Activated naive CD8-positive, alpha-beta T cell treated with anti-CD3 and anti-CD28 coated beads, Interleukin-2, amount 10 ng/mL, durations not matched to agents 7 days and 5 days (primary cell): ENCODE measurements at regions of chr3 and their contacts with region 1.

Region 1: DNA sequence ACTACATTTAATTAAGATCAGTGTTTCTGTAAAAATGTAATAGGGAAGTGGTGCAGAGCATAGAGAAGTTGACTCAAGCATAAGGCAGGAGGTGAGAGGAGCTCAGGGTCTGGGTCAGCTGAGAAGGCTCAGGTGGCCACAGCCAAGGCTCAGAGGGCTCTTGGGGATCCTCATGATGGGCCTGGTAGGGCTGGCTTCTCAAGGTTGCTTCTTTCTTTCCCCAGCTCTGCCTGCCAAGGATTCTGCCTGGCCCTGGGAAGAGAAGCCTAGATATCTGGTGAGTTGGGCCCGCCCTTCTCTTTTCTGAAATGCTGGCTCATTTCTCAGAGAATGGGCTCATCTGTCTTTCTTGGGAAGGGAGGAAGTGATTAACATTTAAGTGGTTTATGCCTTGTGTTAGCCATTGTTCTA is 6.5 kb downstream of the ZNF589 start:
- DNase-seq: peak; percentile 37
- ATAC-seq: peak; percentile 83
- H3K4me3 Mint-ChIP-seq: peak overlapping the region; percentile 56
- H3K27ac Mint-ChIP-seq: peak overlapping the region; percentile 80
- H3K4me1 Mint-ChIP-seq: peaks cover 29% of the 10 kb centered on the region
- H3K27me3 Mint-ChIP-seq: no peaks in the 10 kb centered on the region

Region 2: DNA sequence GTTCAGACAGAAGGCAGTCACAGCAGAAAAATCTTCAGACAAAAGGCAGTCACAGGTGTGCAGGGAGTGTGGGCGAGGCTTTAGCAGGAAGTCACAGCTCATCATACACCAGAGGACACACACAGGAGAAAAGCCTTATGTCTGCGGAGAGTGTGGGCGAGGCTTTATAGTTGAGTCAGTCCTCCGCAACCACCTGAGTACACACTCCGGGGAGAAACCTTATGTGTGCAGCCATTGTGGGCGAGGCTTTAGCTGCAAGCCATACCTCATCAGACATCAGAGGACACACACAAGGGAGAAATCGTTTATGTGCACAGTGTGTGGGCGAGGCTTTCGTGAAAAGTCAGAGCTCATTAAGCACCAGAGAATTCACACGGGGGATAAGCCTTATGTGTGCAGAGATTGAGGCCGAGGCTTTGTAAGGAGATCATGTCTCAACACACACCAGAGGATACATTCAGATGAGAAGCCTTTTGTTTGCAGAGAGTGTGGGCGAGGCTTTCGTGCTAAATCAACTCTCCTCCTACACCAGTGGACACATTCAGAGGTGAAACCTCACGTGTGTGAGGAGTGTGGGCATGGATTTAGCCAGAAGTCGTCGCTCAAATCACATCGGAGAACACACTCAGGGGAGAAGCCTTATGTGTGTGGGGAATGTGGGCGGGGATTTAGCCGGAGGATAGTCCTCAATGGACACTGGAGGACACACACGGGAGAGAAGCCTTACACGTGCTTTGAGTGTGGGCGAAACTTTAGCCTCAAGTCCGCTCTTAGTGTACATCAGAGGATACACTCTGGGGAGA is 21.2 kb after region 1 on chr3:
- POLR2A ChIA-PET with region 1: interaction called, 12 read pairs
- DNase-seq: peak; percentile 66
- ATAC-seq: peak; percentile 99
- H3K4me3 Mint-ChIP-seq: peak overlapping the region; percentile 66
- H3K27ac Mint-ChIP-seq: peak overlapping the region; percentile 88
- H3K4me1 Mint-ChIP-seq: peaks cover 30% of the 10 kb centered on the region
- H3K27me3 Mint-ChIP-seq: no peaks in the 10 kb centered on the region